ENCODE measurements at regions of chrX and their contacts with region 1.

Region 1: DNA sequence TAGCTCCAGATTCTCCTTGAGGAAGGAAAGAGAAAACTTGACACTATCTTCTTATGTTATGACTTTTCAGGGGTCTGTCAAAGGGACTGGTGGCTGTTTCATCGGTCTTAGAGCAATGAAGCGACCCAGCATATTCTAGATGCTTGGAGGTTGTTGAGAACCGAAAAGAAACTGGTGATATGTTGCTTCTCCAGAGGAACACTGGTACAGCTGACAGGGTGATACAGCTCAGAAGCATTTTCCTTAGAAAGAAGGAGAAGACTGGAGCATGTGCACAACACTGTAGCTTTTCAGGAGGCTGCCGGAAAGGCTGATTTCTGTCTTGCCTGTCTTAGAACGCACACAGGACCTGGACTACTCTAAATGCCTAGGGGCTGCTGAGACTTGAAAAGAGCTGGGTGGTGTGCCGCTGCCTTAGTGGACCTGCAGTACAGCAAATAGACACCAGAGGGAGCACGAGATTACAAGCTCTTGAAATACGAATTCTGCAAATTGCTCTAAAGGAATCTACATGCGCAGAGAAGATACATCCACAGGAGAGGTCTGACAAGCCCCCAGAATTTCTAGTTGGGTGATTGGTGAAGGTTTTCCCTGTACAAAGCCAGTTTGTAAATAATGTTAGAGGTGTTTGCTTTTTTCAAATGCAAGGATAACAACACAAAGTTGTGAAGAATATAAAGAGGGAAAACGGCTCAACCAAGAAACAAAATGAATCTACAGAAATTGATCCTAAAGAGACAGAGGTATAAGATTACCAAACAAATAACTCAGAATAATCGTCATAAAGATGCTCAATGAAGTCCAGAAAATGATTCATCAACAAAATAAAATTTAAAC is 223.1 kb upstream of the DMD start:
- DNase-seq: no peak
- ATAC-seq: peak; percentile 82
- H3K4me3 ChIP-seq: no peak overlapping the region
- H3K27ac ChIP-seq: no peak overlapping the region
- H3K4me1 ChIP-seq: no peaks in the 10 kb centered on the region
- H3K27me3 ChIP-seq: no peaks in the 10 kb centered on the region
- CTCF ChIP-seq: peak; percentile 76 to 82 (median 81)
- EP300 ChIP-seq: no peak
- POLR2A ChIP-seq: no peak
- RAD21 ChIP-seq: peak; percentile 73

Region 2: DNA sequence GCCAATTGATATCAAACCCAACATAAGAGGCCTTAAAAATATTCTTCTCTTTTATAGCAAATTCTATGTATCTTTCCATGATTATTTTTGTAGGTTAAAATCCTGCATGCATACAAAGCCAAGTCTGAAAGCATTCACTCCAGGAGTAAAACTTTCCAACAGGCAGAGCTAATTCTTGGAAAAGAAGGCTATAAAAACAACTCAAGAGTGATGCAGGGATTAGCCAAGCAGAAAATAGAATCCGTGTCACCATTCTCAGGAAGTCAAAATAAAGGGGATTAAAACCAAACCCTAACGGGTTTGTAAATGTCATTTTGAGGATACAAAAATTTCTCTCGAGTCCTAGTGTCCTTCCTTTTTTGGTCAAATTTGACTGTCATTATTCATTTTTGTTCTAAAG is 635.5 kb before region 1 on chrX:
- CTCF ChIA-PET with region 1: no interaction called
- POLR2A ChIA-PET with region 1: no interaction called
- RAD21 ChIA-PET with region 1: no interaction called
- SMC1A ChIA-PET with region 1: no interaction called
- in situ Hi-C with region 1: no loop called
- intact Hi-C with region 1: no loop called
- DNase-seq: no peak
- ATAC-seq: no peak
- H3K4me3 ChIP-seq: no peak overlapping the region
- H3K27ac ChIP-seq: no peak overlapping the region
- H3K4me1 ChIP-seq: no peaks in the 10 kb centered on the region
- H3K27me3 ChIP-seq: no peaks in the 10 kb centered on the region
- CTCF ChIP-seq: no peak
- EP300 ChIP-seq: no peak
- POLR2A ChIP-seq: no peak
- RAD21 ChIP-seq: no peak

Region 3: GRCh38 chrX:33447285-33447684 is 12.8 kb after region 1 on chrX:
- CTCF ChIA-PET with region 1: interaction called, 11 read pairs
- POLR2A ChIA-PET with region 1: no interaction called
- RAD21 ChIA-PET with region 1: no interaction called
- SMC1A ChIA-PET with region 1: interaction called, 4 read pairs
- in situ Hi-C with region 1: no loop called
- intact Hi-C with region 1: no loop called
- DNase-seq: no peak
- ATAC-seq: no peak
- H3K4me3 ChIP-seq: no peak overlapping the region
- H3K27ac ChIP-seq: no peak overlapping the region
- H3K4me1 ChIP-seq: no peaks in the 10 kb centered on the region
- H3K27me3 ChIP-seq: no peaks in the 10 kb centered on the region
- CTCF ChIP-seq: no peak
- EP300 ChIP-seq: no peak
- POLR2A ChIP-seq: no peak
- RAD21 ChIP-seq: no peak

Region 4: GRCh38 chrX:33589316-33589715 is 154.8 kb after region 1 on chrX:
- CTCF ChIA-PET with region 1: no interaction called
- POLR2A ChIA-PET with region 1: no interaction called
- RAD21 ChIA-PET with region 1: no interaction called
- SMC1A ChIA-PET with region 1: no interaction called
- in situ Hi-C with region 1: no loop called
- intact Hi-C with region 1: no loop called
- DNase-seq: no peak
- ATAC-seq: no peak
- H3K4me3 ChIP-seq: no peak overlapping the region
- H3K27ac ChIP-seq: no peak overlapping the region
- H3K4me1 ChIP-seq: no peaks in the 10 kb centered on the region
- H3K27me3 ChIP-seq: no peaks in the 10 kb centered on the region
- CTCF ChIP-seq: no peak
- EP300 ChIP-seq: no peak
- POLR2A ChIP-seq: no peak
- RAD21 ChIP-seq: no peak

Region 5: GRCh38 chrX:34275699-34276098 is 841.2 kb after region 1 on chrX:
- CTCF ChIA-PET with region 1: interaction called, 11 read pairs
- POLR2A ChIA-PET with region 1: no interaction called
- RAD21 ChIA-PET with region 1: interaction called, 5 read pairs
- SMC1A ChIA-PET with region 1: interaction called, 7 read pairs
- in situ Hi-C with region 1: no loop called
- intact Hi-C with region 1: no loop called
- DNase-seq: no peak
- ATAC-seq: no peak
- H3K4me3 ChIP-seq: no peak overlapping the region
- H3K27ac ChIP-seq: no peak overlapping the region
- H3K4me1 ChIP-seq: no peaks in the 10 kb centered on the region
- H3K27me3 ChIP-seq: no peaks in the 10 kb centered on the region
- CTCF ChIP-seq: no peak; a peak in 1 of 6 replicates
- EP300 ChIP-seq: no peak
- POLR2A ChIP-seq: no peak
- RAD21 ChIP-seq: no peak

Region 6: DNA sequence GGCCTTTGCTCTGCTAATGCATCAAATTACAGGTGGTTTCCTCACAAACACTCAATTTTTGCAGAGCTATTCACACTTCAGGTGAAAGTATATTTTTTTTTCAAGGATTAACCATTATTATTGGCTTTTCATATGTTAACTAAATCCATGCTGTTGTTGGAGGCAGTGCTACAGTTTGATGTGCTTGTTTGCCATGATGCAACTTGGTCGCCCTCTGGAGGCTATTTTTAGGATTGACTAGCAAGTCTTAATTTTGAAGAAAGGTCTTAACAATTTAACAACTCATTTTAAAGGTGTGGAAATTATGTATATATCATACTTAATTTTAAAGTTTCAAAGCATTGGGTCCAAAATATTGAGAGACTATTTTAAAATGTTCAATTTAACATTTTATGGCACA is 866.4 kb after region 1 on chrX:
- CTCF ChIA-PET with region 1: interaction called, 63 read pairs
- POLR2A ChIA-PET with region 1: no interaction called
- RAD21 ChIA-PET with region 1: interaction called, 14 read pairs
- SMC1A ChIA-PET with region 1: interaction called, 10 read pairs
- in situ Hi-C with region 1: loop called (anchors 5 kb)
- intact Hi-C with region 1: loop called (anchors 1 kb)
- DNase-seq: no peak
- ATAC-seq: peak; percentile 61; the same call in 2 of the 3 replicates
- H3K4me3 ChIP-seq: no peak overlapping the region
- H3K27ac ChIP-seq: no peak overlapping the region
- H3K4me1 ChIP-seq: no peaks in the 10 kb centered on the region
- H3K27me3 ChIP-seq: no peaks in the 10 kb centered on the region
- CTCF ChIP-seq: peak; percentile 49 to 75 (median 60); a peak in 5 of 6 replicates
- EP300 ChIP-seq: no peak
- POLR2A ChIP-seq: no peak
- RAD21 ChIP-seq: peak; percentile 78

Measured in GM12878 (cell line).